Naive thymus-derived CD4-positive, alpha-beta T cell (primary cell): ENCODE measurements at regions of chr12 and their contacts with region 1.

Region 1: DNA sequence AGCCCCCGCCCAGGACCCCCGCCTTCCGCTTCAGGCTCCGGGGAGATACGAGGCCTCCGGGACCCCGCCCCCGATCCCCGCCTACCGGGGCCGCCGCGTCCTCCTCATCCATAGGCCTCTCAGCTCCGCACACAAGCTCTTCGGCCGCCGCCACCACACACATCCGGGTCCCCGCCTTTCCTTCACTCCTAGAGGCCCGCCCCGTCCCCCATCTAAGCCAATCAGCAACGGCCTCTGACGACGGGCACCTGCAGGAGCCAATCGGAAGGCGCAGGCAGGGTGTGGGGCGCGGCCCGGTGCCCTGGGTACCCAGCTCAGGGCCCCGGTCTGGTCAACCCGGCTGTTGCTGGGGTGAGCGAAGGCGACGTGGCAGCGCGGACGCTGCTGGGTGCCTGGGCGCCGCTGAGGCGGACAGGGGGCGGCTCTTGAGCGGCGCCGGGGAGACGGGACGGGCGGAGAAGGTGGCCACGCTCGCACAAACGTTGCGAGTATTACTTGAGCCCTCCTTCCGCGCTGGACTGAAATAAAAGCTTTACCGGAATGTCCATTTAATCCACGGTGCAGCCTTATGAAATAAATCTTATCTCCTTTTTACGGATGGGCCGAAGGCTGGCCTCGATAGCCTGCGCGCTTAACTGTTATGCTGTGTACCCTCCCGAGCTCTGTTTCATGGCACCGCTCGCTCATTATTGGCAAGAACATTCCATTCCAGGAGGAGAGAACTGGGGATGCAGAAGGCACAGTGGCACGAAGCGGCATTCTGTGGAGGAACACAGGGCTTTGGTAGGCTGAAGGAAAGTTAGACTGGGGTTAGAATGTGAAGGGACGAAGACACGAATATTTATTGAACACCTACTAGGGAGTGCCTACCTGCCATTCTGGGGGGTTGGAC is at the start of gene SPRYD3:
- DNase-seq: peak; percentile 96 to 99 (median 97)
- ATAC-seq: peak; percentile 99
- H3K4me3 ChIP-seq: peak within 1 kb of the TSS; percentile 95
- H3K4me3 Mint-ChIP-seq: peak within 1 kb of the TSS; percentile 90 to 98 (median 92)
- H3K27ac ChIP-seq: peak within 1 kb of the TSS; percentile 93
- H3K27ac Mint-ChIP-seq: peak within 1 kb of the TSS; percentile 95 to 98 (median 96)
- H3K4me1 ChIP-seq: peaks cover 10 to 14% of the 10 kb centered on the region in 2 donors
- H3K4me1 Mint-ChIP-seq: peaks cover 26 to 53% (median 40%) of the 10 kb centered on the region in 7 donors
- H3K27me3 ChIP-seq: no peaks in the 10 kb centered on the region
- H3K27me3 Mint-ChIP-seq: peaks cover 0 to 3% (median 0%) of the 10 kb centered on the region in 5 donors
- total RNA-seq, gene SPRYD3: 33.0 to 48.0 (median 36.4) TPM

Region 2: GRCh38 chr12:53047221-53048042 is 32.0 kb before region 1 on chr12:
- CTCF ChIA-PET with region 1: interaction called, 9 read pairs
- POLR2A ChIA-PET with region 1: interaction called, 24 read pairs
- intact Hi-C with region 1: no loop called
- DNase-seq: peak; percentile 53 to 86 (median 70)
- ATAC-seq: peak; percentile 91
- H3K4me3 ChIP-seq: peak overlapping the region; percentile 82
- H3K4me3 Mint-ChIP-seq: peak overlapping the region in 9 of 10 donors; percentile 43 to 95 (median 76)
- H3K27ac ChIP-seq: peak overlapping the region; percentile 78
- H3K27ac Mint-ChIP-seq: peak overlapping the region in 6 of 9 donors; percentile 12 to 92 (median 82)
- H3K4me1 ChIP-seq: peaks cover 7 to 9% of the 10 kb centered on the region in 2 donors
- H3K4me1 Mint-ChIP-seq: peaks cover 0 to 24% (median 13%) of the 10 kb centered on the region in 7 donors
- H3K27me3 ChIP-seq: no peaks in the 10 kb centered on the region
- H3K27me3 Mint-ChIP-seq: peaks cover 0 to 13% (median 0%) of the 10 kb centered on the region in 5 donors

Region 3: DNA sequence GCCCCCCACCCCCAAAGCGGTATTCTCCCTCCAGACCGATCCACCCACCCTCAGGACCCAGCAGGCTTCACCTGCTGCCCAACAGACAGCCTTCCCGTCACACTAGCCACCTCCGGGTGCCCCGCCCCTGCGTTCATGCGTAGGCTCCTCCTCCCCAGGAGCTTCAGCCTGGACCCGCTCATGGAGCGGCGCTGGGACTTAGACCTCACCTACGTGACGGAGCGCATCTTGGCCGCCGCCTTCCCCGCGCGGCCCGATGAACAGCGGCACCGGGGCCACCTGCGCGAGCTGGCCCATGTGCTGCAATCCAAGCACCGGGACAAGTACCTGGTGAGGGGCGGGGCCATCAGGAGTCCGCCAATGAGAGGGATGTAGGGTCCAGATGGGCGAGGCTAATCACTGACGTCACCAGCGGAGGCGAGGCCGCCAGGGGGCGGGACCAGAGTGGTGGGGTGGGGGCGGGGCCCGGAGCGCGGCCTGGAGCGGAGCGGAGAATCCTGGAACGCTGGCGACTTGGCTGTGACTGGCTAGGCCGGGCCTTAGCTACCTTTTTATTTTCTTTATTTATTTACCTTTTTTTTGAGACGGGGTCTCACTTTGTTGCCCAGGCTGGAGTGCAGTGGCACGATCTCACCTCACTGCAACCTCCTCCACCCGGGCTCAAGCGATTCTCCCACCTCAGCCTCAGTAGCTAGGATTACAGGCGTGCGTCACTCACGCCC is 25.2 kb before region 1 on chr12:
- CTCF ChIA-PET with region 1: interaction called, 3 read pairs
- POLR2A ChIA-PET with region 1: interaction called, 13 read pairs
- intact Hi-C with region 1: loop called (anchors 1 kb)
- DNase-seq: peak; percentile 85 to 94 (median 93)
- ATAC-seq: peak; percentile 98
- H3K4me3 ChIP-seq: peak overlapping the region; percentile 95
- H3K4me3 Mint-ChIP-seq: peak overlapping the region; percentile 89 to 97 (median 94)
- H3K27ac ChIP-seq: peak overlapping the region; percentile 71
- H3K27ac Mint-ChIP-seq: peak overlapping the region; percentile 83 to 96 (median 92)
- H3K4me1 ChIP-seq: peaks cover 6 to 9% of the 10 kb centered on the region in 2 donors
- H3K4me1 Mint-ChIP-seq: peaks cover 8 to 14% (median 11%) of the 10 kb centered on the region in 7 donors
- H3K27me3 ChIP-seq: no peaks in the 10 kb centered on the region
- H3K27me3 Mint-ChIP-seq: no peaks in the 10 kb centered on the region

Region 4: DNA sequence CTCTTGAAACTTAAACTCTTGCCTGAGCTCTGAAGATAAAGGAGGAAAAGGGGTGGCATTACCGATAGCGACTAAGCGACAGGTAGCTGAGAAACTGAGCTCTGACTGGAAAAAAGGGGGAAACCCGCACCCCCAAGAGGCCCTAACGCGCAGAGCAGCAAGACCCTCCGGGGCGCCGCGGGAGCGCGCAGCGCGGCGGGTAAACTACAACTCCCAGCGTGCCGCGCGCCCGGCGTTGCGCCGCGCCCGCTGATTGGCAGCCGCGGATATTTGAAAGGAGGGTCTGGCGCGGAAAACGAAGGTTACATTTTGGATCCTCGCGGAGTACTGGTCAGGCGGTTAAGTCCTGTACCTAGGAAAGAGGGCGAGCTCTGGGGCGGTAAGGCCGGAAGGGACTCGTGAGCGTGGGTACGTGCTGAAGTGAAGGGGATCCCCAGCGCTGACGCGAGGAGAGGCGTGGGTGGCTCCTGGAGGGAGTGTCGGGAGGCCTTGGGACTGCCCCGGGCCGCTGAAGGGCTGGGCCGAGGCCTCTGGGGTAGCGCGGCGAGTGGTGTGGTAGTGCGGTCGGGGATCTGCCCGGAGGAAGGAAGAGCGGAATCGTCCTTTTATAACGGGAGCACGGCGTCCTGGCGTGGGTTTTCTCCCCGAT is 188.7 kb after region 1 on chr12 and contains the start of gene ESPL1:
- CTCF ChIA-PET with region 1: no interaction called
- POLR2A ChIA-PET with region 1: no interaction called
- intact Hi-C with region 1: loop called in 1 of 2 experiments (anchors 2 kb)
- DNase-seq: peak; percentile 67 to 91 (median 81)
- ATAC-seq: peak; percentile 93
- H3K4me3 ChIP-seq: peak within 1 kb of the TSS; percentile 80
- H3K4me3 Mint-ChIP-seq: peak within 1 kb of the TSS; percentile 95 to 99 (median 96)
- H3K27ac ChIP-seq: peak within 1 kb of the TSS; percentile 83
- H3K27ac Mint-ChIP-seq: peak within 1 kb of the TSS; percentile 44 to 98 (median 88)
- H3K4me1 ChIP-seq: peaks cover 9 to 11% of the 10 kb centered on the region in 2 donors
- H3K4me1 Mint-ChIP-seq: peaks cover 10 to 54% (median 20%) of the 10 kb centered on the region in 7 donors
- H3K27me3 ChIP-seq: no peaks in the 10 kb centered on the region
- H3K27me3 Mint-ChIP-seq: no peaks in the 10 kb centered on the region
- total RNA-seq, gene ESPL1: 0.08 to 65.4 (median 1.1) TPM